AG04449 (cell line): ENCODE measurements at regions of chr20 and their contacts with region 1.

Region 1: DNA sequence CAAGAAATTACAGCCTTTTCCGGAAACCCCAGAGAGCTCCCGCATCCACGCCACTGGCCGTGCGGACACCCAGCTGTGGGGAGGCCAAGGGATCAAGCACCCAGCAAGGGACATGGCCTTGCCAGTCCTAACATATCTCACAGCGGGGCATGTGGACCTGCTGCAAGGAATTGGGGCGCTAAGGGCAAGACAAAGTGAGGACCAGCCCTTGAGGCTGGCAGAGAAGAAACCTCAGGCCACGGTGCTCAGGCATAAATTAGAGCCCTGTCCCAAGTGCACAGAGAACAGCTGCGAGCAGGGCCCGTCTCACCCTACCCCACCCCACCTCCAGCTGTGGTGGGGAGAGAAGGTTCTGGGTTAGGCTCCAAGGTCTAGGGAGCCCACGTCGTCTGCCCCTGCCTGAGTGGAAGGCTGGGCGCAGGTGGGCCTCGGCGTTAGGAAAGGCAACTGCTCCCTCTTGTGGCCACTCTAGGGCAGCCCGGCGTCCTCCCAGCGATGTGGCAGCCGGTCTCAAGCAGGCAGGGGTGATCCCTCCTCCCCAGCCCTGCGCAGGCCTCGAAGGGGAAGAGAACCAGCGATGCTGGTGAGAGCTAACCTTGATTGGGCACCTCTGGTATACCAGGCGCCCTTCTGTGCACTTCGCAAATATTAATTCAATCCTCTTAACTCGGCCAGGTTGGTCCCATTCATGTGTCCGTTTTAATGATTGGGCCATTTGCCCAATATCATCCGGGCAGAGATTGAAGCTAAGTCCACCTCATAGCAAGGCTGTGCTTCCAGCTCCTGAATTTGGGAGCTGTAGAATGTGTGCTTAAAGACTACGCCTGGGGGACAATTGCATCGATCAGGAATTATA is 235.8 kb downstream of the NFATC2 start:
- DNase-seq: no peak
- H3K4me3 ChIP-seq: no peak overlapping the region
- CTCF ChIP-seq: peak; percentile 98

Region 2: DNA sequence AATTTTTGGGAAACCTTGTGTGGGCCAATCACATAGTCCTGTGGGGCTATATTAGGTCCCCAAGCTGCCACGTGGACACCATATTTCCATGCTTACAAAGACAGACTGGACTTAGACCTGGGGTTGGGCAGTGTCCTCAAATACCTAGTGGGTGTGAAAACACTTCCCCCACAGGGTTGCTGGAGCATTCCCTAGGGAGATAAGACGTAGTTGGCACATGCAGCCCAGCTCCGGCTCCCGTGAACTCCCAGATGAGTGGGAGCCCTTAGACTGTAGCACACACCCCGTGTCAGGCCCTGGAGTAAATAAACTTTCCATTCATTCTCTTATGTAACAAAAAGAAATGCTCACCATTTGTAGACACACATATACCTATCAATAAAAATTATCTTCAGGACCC is 298.0 kb before region 1 on chr20:
- CTCF ChIA-PET with region 1: interaction called, 144 read pairs
- POLR2A ChIA-PET with region 1: no interaction called
- DNase-seq: no peak
- H3K4me3 ChIP-seq: no peak overlapping the region
- CTCF ChIP-seq: no peak

Region 3: DNA sequence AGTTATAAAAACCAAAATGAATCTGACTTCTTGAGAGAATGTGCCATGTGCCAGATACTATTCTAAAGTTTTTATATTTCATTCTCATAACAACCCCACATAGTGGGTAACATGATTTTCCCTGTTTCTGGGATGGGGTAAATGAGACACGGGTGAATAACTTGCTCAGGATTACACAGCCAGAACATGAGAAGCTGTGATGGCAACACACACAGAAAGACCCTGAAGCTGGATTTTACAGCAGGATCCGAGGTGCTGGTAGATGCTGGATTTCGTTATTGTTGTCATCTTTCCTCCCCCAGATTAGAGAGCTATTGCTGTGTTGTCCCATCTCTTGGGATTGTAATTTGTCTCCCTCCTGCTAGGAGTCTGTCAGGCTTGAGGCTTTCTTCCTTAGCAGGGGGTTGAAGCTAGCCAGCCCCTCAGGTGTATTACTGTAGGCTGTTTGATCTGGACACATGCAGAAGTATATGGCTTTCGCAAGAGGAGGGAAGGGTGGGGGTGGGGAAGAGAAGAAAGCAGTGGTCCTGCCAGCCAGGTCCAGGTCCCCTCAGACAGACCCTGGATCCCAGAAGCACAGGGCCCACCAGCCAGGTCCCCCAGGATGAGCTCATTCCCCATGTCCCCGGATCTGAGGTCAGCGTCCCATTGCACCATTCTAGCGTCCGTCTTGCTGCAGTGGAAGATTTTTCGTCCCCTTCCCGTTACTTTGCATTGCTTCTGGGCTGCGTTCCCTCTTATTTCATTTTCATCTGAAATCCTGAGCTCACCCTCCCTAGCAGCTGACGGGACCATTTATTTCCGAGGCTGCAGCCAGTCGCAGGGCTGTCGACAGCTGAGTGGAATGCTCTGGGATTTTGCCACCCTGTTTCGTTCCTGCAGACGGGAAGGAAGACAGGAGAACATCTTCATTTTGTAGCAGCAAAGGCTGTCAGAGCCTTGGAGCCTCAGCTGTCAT is 276.5 kb before region 1 on chr20:
- CTCF ChIA-PET with region 1: interaction called, 32 read pairs
- POLR2A ChIA-PET with region 1: no interaction called
- DNase-seq: no peak
- H3K4me3 ChIP-seq: no peak overlapping the region
- CTCF ChIP-seq: no peak

Region 4: GRCh38 chr20:51262240-51262639 is 44.5 kb before region 1 on chr20:
- CTCF ChIA-PET with region 1: interaction called, 11 read pairs
- POLR2A ChIA-PET with region 1: no interaction called
- DNase-seq: no peak
- H3K4me3 ChIP-seq: no peak overlapping the region
- CTCF ChIP-seq: no peak

Region 5: DNA sequence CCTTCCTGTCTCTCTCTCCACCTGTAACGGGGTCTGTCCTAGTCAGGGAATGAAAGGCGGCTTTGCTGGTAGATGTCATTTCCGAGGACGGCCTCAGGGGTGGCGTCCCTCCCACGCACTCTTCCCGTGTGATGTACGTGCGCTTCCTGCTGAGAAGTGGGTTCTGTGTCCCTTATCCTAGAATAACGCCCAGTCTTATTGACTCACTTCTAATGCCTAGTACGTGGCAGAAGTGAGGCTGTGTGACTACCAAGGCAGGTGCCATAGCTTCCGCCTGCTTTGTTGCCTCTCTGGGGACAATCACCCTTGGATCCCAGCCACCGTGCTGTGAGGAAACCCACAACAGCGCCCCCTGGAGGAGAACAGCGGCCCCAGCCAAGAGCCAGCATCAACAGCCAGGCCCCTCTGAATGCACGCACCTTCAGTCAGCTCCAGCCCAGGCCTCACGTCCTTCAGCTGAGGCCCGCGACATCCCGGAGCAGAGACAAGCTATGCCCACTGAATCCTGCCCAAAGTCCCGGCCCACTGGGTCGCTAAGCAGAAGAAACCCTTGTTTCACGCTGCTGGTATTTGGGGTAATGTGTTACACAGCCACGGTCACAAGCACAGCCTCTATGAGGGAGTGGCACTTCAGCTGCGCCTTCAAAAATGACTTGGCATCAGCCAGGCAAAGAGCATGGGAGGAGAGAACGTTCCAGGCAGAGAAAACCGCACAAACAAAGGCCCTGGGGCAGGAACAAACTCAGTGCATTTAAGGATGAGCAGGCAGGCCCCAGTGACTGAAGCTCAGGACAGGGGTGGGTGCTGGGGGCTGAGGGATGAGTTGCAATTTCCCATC is 11.5 kb after region 1 on chr20:
- CTCF ChIA-PET with region 1: interaction called, 108 read pairs
- POLR2A ChIA-PET with region 1: no interaction called
- DNase-seq: no peak
- H3K4me3 ChIP-seq: no peak overlapping the region
- CTCF ChIP-seq: peak; percentile 56

Region 6: GRCh38 chr20:51354769-51355319 is 48.1 kb after region 1 on chr20:
- CTCF ChIA-PET with region 1: interaction called, 10 read pairs
- POLR2A ChIA-PET with region 1: no interaction called
- DNase-seq: no peak
- H3K4me3 ChIP-seq: no peak overlapping the region
- CTCF ChIP-seq: no peak